PC-3 (cell line): ENCODE measurements at regions of chr12 and their contacts with region 1.

Region 1: GRCh38 chr12:54324617-54325441 is at the start of gene COPZ1:
- DNase-seq: peak; percentile 99
- ATAC-seq: peak; percentile 96
- H3K4me3 ChIP-seq: peak within 1 kb of the TSS; percentile 78
- H3K27ac ChIP-seq: peak within 1 kb of the TSS; percentile 74
- H3K4me1 ChIP-seq: peaks cover 15% of the 10 kb centered on the region
- H3K27me3 ChIP-seq: no peaks in the 10 kb centered on the region
- CTCF ChIP-seq: peak; percentile 86
- total RNA-seq, gene COPZ1: 121 and 156 TPM in 2 replicates

Region 2: GRCh38 chr12:54229624-54230212 is 95.1 kb before region 1 on chr12:
- CTCF ChIA-PET with region 1: no interaction called
- POLR2A ChIA-PET with region 1: no interaction called
- intact Hi-C with region 1: no loop called
- DNase-seq: peak; percentile 88
- ATAC-seq: peak; percentile 94
- H3K4me3 ChIP-seq: no peak overlapping the region
- H3K27ac ChIP-seq: peak overlapping the region; percentile 48
- H3K4me1 ChIP-seq: peaks cover 13% of the 10 kb centered on the region
- H3K27me3 ChIP-seq: no peaks in the 10 kb centered on the region
- CTCF ChIP-seq: no peak

Region 3: GRCh38 chr12:54251667-54252284 is 73.1 kb before region 1 on chr12:
- CTCF ChIA-PET with region 1: interaction called, 9 read pairs
- POLR2A ChIA-PET with region 1: no interaction called
- intact Hi-C with region 1: loop called (anchors 1 kb)
- DNase-seq: peak; percentile 65
- ATAC-seq: peak; percentile 57
- H3K4me3 ChIP-seq: no peak overlapping the region
- H3K27ac ChIP-seq: no peak overlapping the region
- H3K4me1 ChIP-seq: no peaks in the 10 kb centered on the region
- H3K27me3 ChIP-seq: no peaks in the 10 kb centered on the region
- CTCF ChIP-seq: peak; percentile 71

Region 4: GRCh38 chr12:54287261-54288157 is 37.3 kb before region 1 on chr12:
- CTCF ChIA-PET with region 1: interaction called, 12 read pairs
- POLR2A ChIA-PET with region 1: interaction called, 4 read pairs
- intact Hi-C with region 1: no loop called
- DNase-seq: no peak
- ATAC-seq: no peak; the same call in 1 of the 2 replicates
- H3K4me3 ChIP-seq: no peak overlapping the region
- H3K27ac ChIP-seq: no peak overlapping the region
- H3K4me1 ChIP-seq: peaks cover 16% of the 10 kb centered on the region
- H3K27me3 ChIP-seq: no peaks in the 10 kb centered on the region
- CTCF ChIP-seq: no peak

Region 5: GRCh38 chr12:54306925-54307741 is 17.7 kb before region 1 on chr12:
- CTCF ChIA-PET with region 1: interaction called, 16 read pairs
- POLR2A ChIA-PET with region 1: no interaction called
- intact Hi-C with region 1: no loop called
- DNase-seq: peak; percentile 50
- ATAC-seq: peak; percentile 35; the same call in 1 of the 2 replicates
- H3K4me3 ChIP-seq: no peak overlapping the region
- H3K27ac ChIP-seq: no peak overlapping the region
- H3K4me1 ChIP-seq: peaks cover 4% of the 10 kb centered on the region; the same call in 1 of the 2 replicates
- H3K27me3 ChIP-seq: no peaks in the 10 kb centered on the region
- CTCF ChIP-seq: no peak

Region 6: DNA sequence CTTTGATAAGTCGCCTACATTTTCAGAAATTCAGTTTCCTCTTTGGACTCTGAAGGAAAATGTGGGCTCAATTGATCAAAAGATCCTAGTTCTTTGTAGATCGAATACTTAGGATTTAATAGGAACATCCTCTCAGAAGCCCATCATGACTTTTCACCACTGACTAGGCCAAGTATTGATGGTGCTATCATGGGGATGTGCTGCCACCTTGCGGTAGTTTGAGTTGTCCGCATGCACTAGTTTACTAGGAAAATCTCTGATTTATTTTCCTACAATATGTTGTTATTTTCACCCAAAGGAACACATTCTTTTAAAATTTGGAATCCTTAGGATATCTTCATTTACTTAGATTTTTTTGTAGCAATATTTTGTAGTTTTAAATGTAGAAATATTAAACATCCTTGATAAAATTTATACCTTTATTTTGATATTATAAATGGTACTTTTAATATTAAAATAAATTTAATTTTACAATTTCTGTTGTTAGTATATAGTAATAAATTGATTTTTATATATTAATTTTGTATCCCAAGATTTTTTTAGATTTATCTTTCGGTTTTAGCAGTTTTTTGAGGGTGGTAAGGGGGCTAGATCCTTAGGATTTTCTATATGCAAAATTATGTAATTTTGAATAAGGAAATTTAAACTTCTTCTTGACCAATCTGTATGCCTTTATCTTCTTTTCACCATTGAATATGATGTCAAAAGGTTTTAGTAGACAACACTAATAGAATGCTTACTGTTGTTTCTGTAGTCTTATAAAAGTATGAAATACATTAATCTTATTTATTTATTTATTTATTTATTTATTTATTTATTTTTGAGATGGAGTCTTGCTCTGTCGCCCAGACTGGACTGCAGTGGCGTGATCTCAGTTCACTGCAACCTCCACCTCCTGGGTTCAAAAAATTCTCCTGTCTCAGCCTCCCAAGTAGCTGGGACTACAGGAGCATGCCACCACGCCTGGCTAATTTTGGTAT is 748.5 kb after region 1 on chr12:
- CTCF ChIA-PET with region 1: no interaction called
- POLR2A ChIA-PET with region 1: interaction called, 10 read pairs
- intact Hi-C with region 1: no loop called
- DNase-seq: peak; percentile 81
- ATAC-seq: peak; percentile 62; the same call in 1 of the 2 replicates
- H3K4me3 ChIP-seq: no peak overlapping the region
- H3K27ac ChIP-seq: no peak overlapping the region
- H3K4me1 ChIP-seq: no peaks in the 10 kb centered on the region
- H3K27me3 ChIP-seq: peaks cover 28% of the 10 kb centered on the region
- CTCF ChIP-seq: peak; percentile 89